Common myeloid progenitor, CD34-positive (primary cell): ENCODE measurements at regions of chr7 and their contacts with region 1.

Region 1: DNA sequence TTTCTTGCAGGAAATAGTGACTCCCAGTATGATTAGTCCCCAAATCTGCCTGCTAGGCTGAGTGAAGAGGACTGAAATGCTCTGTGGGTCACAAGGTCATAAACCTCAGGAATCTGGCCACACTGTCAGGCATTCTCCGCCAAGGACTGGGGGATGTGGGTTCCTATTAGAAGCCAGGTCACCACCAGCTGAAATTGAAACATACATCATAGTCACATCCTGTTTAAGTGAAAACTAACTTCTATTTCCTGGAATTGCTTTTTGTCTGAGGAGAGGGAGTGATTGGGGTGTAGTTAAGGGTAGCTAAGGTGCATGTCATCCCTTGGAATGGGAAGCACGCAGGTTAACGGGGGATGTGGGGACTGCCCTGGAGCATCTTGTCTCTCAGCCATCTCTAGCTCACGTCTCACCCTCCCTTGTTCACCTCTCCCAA is 11.9 kb upstream of the GSAP start:
- DNase-seq: peak in 2 of 3 donors; percentile 48 to 55
- H3K4me3 ChIP-seq: no peak overlapping the region
- H3K27ac ChIP-seq: no peak overlapping the region
- H3K4me1 ChIP-seq: peaks cover 4 to 26% (median 9%) of the 10 kb centered on the region in 4 experiments
- H3K27me3 ChIP-seq: no peaks in the 10 kb centered on the region

Region 2: DNA sequence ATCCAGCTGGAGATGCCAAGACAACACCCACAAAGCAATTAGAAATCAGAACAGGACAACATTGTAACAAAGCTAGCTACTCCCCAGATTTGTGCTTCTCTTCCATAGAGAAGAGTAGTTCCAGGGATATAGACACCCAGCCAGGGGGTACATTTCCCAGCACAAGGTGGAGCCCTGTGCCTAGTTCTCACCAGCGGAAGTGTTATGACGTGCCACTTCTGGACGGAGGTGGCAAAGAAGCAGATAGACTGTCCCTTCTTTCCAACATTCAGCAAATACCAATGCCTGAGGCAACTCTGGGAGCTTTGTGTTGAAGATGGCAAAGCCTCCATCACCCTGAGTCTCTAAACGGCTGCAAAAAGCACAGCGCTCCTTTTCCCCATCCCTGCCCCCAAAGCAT is 11.5 kb after region 1 on chr7:
- CTCF ChIA-PET with region 1: interaction called, 10 read pairs
- POLR2A ChIA-PET with region 1: no interaction called
- DNase-seq: no peak
- H3K4me3 ChIP-seq: peak overlapping the region in 1 of 7 experiments; percentile 43
- H3K27ac ChIP-seq: no peak overlapping the region
- H3K4me1 ChIP-seq: peaks cover 0 to 4% (median 4%) of the 10 kb centered on the region in 4 experiments
- H3K27me3 ChIP-seq: no peaks in the 10 kb centered on the region

Region 3: DNA sequence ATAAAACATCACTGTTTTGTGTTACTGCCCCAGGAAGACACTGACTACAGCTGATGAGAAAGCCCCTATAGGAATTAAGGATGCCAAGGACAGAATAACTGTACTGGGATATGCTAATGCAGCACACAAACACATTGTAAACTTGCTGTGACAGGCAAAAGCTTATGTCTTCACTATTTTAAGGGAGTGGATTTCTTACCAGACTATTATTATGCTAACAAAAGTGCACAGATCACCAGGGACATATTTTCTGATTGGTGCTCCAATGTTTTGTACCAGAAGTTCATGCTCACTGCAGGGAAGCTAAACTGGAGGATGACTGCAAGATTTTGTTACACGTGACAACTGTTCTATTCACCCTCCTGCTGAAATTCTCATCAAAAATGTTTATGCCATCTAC is 60.9 kb after region 1 on chr7:
- CTCF ChIA-PET with region 1: no interaction called
- POLR2A ChIA-PET with region 1: no interaction called
- DNase-seq: no peak
- H3K4me3 ChIP-seq: no peak overlapping the region
- H3K27ac ChIP-seq: no peak overlapping the region
- H3K4me1 ChIP-seq: no peaks in the 10 kb centered on the region
- H3K27me3 ChIP-seq: no peaks in the 10 kb centered on the region

Region 4: DNA sequence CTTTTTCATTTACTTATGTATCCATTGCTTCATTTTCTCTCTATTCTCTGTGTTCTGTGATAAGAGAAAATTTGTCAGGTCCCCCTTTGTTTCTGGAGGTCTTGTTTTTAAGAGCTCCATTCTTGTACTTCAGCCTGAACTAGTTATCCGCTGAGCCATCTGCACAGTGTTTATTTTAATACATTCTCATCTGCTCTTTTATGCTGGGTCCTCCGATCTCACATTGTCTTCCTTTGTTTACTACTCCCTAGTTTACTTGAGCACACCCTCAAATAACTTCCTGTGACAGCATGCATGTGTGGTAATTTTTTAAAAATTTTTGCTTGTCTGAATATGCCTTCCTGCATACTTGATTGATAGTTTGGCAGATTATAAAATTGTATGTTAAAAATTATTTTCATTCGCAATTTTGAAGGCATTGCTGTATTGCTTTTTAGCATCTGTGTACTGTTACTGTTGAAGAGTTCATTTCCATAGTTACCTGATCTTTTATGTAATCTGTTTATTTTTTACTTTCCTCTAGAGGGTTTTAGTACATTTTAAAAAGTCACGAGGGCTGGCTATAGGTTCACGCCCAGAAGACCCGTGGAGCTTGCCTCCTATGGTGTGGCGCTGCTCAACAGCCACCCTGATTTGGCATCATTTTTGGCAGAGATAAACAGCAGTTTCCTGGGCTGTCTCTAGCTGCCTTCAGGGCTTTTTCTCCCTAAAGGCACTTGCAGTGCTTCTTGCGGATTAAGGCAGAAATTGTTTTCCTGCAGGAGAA is 300.1 kb after region 1 on chr7:
- CTCF ChIA-PET with region 1: no interaction called
- POLR2A ChIA-PET with region 1: no interaction called
- DNase-seq: peak; percentile 76 to 95 (median 87)
- H3K4me3 ChIP-seq: peak overlapping the region in 5 of 7 experiments; percentile 15 to 51 (median 28)
- H3K27ac ChIP-seq: peak overlapping the region; percentile 90 to 94
- H3K4me1 ChIP-seq: peaks cover 15 to 36% (median 16%) of the 10 kb centered on the region in 4 experiments
- H3K27me3 ChIP-seq: no peaks in the 10 kb centered on the region